IMR-90 (cell line): ENCODE measurements at regions of chr15 and their contacts with region 1.

Region 1: DNA sequence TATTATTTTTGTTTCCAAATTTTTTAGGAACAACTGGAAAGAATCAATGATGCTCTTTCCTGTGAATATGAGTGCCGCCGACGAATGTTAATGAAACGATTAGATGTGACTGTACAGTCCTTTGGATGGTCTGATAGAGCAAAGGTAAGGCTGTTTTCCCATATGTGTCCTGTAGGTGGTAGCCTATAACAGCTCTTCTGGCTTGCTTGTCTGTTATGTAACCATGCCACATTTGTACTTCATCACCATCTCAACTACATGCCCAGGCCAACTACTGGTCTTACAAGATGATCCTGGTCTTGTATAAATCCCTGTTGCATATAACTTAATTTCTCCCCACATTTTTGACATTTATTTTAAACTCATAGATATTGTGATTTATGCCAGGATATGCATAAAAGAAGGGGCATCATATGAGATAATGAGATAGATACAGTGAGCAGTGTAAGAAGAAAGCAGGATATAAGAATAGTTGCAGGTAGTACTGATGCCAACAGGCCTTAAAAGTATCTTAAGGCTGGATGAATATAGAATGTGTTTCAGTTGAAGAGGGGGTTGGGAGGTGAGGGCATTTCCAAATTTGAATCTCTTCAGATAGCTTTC is 20.3 kb downstream of the FAM98B start:
- DNase-seq: peak; percentile 82
- ATAC-seq: peak; percentile 89
- H3K4me3 ChIP-seq: no peak overlapping the region
- H3K27ac ChIP-seq: no peak overlapping the region
- H3K4me1 ChIP-seq: peaks cover 6% of the 10 kb centered on the region
- H3K27me3 ChIP-seq: no peaks in the 10 kb centered on the region
- CTCF ChIP-seq: peak; percentile 83
- POLR2A ChIP-seq: no peak
- RAD21 ChIP-seq: peak; percentile 92

Region 2: DNA sequence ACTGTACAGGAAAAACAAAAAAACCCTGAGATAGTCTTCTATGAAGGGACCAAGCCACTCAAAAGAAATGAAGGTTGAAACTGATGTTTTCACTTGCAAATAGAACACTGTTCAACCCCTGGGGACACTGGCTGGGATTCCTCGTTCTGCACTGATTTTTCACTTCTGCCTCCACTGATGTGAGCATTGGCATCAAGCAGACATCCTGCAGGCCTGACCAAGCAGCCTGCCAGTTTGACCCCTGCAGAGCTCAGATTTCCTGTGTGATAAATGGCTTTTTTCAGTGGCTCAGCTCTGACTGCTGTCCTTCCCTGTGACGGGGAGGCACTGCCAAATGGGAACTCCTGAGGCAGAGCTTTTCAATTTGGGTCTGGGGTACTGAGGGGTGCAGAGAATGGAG is 40.3 kb after region 1 on chr15:
- CTCF ChIA-PET with region 1: no interaction called
- POLR2A ChIA-PET with region 1: no interaction called
- dilution Hi-C with region 1: no loop called
- in situ Hi-C with region 1: no loop called
- intact Hi-C with region 1: no loop called
- DNase-seq: no peak
- ATAC-seq: no peak
- H3K4me3 ChIP-seq: no peak overlapping the region
- H3K27ac ChIP-seq: no peak overlapping the region
- H3K4me1 ChIP-seq: peaks cover 9% of the 10 kb centered on the region
- H3K27me3 ChIP-seq: no peaks in the 10 kb centered on the region
- CTCF ChIP-seq: no peak
- POLR2A ChIP-seq: no peak
- RAD21 ChIP-seq: no peak

Region 3: DNA sequence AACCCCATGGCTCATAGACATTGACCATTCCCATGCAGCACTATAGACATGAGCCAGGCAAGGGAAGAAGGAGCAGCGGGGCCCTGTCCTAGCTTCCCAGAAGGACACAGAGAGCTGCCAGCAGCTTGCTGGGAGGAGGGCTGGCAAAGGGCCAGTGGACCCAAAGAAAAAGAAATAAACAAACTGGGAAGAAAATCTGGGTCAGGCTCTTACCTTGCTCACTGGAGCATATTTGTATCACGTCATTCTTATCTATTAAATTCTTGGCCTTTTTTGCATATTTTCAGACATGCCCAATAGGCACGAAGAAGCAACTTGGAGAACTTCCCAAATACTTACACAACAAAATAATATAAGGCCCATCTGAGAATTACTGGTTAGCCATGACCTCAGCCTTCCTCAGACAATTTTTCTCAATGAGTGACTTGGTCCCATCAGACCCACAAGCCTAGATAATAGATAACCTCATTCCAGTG is 62.0 kb after region 1 on chr15:
- CTCF ChIA-PET with region 1: no interaction called
- POLR2A ChIA-PET with region 1: no interaction called
- dilution Hi-C with region 1: no loop called
- in situ Hi-C with region 1: no loop called
- intact Hi-C with region 1: loop called (anchors 5 kb)
- DNase-seq: peak; percentile 96
- ATAC-seq: peak; percentile 84
- H3K4me3 ChIP-seq: no peak overlapping the region
- H3K27ac ChIP-seq: peak overlapping the region; percentile 36; the same call in 1 of the 2 replicates
- H3K4me1 ChIP-seq: peaks cover 15% of the 10 kb centered on the region
- H3K27me3 ChIP-seq: no peaks in the 10 kb centered on the region
- CTCF ChIP-seq: no peak
- POLR2A ChIP-seq: no peak
- RAD21 ChIP-seq: no peak

Region 4: DNA sequence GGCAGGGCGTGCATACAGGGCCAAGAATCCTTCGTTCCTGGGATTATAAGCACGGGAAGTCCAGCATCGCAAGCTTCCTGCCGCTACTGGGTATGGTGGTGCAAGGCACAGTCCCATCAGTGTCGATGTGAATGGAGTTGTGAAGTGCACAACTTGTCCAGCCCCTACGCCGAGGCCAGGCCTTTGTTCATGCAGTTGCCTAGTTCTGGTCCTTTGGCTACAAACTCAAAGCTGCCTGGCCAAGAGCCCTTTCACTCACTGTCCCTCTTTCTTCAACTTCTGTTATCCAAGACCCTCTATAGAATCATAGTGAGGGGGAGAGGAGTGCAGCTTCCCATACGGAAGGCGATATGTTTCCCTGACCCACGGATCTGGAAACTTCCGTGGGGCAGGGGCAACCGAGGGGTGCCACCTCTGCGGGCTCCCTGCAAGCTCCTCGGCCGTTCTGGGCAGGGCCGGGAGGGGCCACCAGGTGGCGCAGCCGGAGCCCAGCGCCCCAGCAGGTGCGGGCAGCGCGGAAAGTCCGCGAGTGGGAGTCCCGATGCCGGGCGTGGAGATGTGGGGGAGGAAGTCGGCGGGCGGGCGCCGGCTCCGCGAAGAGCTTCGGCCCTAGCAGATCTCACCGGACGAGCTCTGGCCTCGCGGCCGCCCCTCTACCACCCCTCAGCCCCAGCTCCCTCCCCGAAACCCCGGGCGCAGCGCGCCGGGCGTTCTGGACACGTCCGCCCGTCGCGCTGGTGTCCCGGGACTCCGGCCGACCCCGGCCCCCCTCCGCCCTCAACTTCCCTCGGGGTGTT is 89.7 kb after region 1 on chr15:
- CTCF ChIA-PET with region 1: interaction called, 5 read pairs
- POLR2A ChIA-PET with region 1: no interaction called
- dilution Hi-C with region 1: no loop called
- in situ Hi-C with region 1: no loop called
- intact Hi-C with region 1: loop called (anchors 1 kb)
- DNase-seq: peak; percentile 35
- ATAC-seq: peak; percentile 89
- H3K4me3 ChIP-seq: peak overlapping the region; percentile 52
- H3K27ac ChIP-seq: no peak overlapping the region
- H3K4me1 ChIP-seq: peaks cover 5% of the 10 kb centered on the region
- H3K27me3 ChIP-seq: peaks cover 21% of the 10 kb centered on the region
- CTCF ChIP-seq: peak; percentile 68
- POLR2A ChIP-seq: no peak
- RAD21 ChIP-seq: peak; percentile 53

Region 5: DNA sequence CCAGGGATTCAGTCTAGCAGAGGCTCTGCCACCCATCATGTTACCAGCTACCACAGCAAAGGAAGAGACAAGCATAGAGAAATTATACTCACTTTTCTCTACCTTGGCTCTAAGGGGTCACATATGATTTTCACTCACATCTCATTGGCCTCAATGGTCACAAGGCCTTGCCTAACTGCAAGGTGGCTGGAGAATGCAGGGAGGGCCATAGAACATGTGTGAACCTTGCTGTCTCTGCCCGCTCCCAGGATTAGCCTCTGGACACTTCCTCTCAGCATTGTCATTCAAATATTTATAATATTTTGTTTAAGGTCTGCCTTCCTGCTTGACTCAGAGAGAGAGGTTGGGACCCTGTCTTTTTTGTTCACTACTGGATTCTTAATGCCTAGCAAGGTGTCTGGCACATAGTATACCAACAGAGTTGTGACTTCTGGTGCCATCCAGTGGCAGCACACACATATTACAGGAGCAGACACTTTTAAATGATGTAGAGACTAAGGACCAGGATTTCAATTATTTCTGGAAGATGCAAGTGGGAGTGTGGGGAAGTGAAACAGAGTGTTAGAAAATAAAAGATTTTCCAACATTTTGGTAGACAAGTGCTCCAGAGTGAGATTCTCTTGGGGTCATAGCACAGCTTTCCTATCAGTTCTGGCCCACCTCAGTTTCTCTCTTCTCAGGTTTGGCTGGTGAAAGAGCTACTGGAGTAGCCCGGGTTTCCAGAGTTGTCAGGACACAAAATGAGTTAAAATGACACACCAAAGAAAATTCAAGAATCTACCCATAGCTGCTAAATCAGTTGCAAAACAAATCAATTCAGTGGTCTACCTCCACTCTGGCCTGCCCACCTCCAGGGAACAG is 209.4 kb after region 1 on chr15:
- CTCF ChIA-PET with region 1: interaction called, 6 read pairs
- POLR2A ChIA-PET with region 1: no interaction called
- dilution Hi-C with region 1: no loop called
- in situ Hi-C with region 1: no loop called
- intact Hi-C with region 1: loop called (anchors 1 kb)
- DNase-seq: peak; percentile 53
- ATAC-seq: peak; percentile 94
- H3K4me3 ChIP-seq: no peak overlapping the region
- H3K27ac ChIP-seq: no peak overlapping the region
- H3K4me1 ChIP-seq: no peaks in the 10 kb centered on the region
- H3K27me3 ChIP-seq: peaks cover 20% of the 10 kb centered on the region
- CTCF ChIP-seq: peak; percentile 86
- POLR2A ChIP-seq: no peak
- RAD21 ChIP-seq: peak; percentile 85

Region 6: DNA sequence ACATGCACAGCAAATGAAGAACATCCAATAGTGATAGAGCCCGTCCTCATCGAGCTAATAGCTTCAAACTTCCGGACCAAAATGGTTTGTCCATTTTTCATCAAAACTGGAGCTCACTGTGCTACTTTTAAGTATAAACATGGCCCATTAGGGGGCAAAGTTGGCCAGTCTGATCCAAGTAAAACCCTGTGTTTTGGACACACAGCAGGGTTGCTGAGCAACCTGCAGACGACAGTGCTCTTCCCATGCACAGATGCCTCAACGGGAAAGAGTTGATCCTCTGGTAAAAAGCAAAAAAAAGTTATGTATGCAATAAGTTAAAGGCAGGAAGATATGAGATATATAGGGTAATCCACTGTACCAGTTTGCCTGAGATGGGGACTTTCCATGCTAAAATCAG is 862.7 kb after region 1 on chr15:
- CTCF ChIA-PET with region 1: no interaction called
- POLR2A ChIA-PET with region 1: no interaction called
- dilution Hi-C with region 1: no loop called
- in situ Hi-C with region 1: no loop called
- intact Hi-C with region 1: no loop called
- DNase-seq: no peak
- ATAC-seq: no peak
- H3K4me3 ChIP-seq: no peak overlapping the region
- H3K27ac ChIP-seq: no peak overlapping the region
- H3K4me1 ChIP-seq: peaks cover 5% of the 10 kb centered on the region
- H3K27me3 ChIP-seq: no peaks in the 10 kb centered on the region
- CTCF ChIP-seq: no peak
- POLR2A ChIP-seq: no peak
- RAD21 ChIP-seq: no peak